ENCODE measurements at regions of chr2 and their contacts with region 1.

Region 1: GRCh38 chr2:197057959-197058358 is 131.5 kb upstream of the PGAP1 start:
- DNase-seq: no peak
- ATAC-seq: no peak
- H3K4me3 Mint-ChIP-seq: no peak overlapping the region
- H3K27ac Mint-ChIP-seq: no peak overlapping the region
- H3K4me1 Mint-ChIP-seq: peaks cover 34% of the 10 kb centered on the region
- H3K27me3 Mint-ChIP-seq: no peaks in the 10 kb centered on the region
- CTCF ChIP-seq: no peak

Region 2: DNA sequence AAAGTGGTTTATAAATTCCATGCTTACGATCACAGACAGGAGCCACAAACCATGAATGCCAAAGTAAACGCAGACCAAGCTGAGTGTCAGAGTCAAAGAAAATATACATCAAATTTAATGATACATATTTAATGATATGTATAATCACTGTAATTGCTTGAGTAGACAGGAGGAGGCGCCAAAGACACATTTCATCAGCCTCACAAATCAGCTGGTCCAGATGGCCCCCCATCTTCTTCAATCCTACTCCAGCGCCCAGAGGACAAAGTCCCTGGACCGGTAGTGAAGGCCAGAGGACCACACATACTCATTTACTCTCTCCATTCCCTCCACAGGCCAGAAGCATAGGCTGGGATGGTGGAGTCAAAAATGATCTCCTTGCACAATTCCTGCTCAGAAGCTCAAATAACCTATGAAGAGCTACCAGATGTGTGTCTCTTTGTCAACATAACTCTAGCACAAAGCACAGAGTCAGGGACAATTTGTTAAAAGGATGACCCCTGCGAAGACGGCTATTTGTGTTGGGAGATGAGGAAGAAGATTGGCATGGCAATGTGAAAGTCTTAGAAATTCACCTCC is 17.9 kb after region 1 on chr2:
- CTCF ChIA-PET with region 1: interaction called, 21 read pairs
- POLR2A ChIA-PET with region 1: no interaction called
- intact Hi-C with region 1: no loop called
- DNase-seq: peak; percentile 20
- ATAC-seq: peak; percentile 35
- H3K4me3 Mint-ChIP-seq: no peak overlapping the region
- H3K27ac Mint-ChIP-seq: no peak overlapping the region
- H3K4me1 Mint-ChIP-seq: peaks cover 45% of the 10 kb centered on the region
- H3K27me3 Mint-ChIP-seq: no peaks in the 10 kb centered on the region
- CTCF ChIP-seq: peak; percentile 62

Region 3: DNA sequence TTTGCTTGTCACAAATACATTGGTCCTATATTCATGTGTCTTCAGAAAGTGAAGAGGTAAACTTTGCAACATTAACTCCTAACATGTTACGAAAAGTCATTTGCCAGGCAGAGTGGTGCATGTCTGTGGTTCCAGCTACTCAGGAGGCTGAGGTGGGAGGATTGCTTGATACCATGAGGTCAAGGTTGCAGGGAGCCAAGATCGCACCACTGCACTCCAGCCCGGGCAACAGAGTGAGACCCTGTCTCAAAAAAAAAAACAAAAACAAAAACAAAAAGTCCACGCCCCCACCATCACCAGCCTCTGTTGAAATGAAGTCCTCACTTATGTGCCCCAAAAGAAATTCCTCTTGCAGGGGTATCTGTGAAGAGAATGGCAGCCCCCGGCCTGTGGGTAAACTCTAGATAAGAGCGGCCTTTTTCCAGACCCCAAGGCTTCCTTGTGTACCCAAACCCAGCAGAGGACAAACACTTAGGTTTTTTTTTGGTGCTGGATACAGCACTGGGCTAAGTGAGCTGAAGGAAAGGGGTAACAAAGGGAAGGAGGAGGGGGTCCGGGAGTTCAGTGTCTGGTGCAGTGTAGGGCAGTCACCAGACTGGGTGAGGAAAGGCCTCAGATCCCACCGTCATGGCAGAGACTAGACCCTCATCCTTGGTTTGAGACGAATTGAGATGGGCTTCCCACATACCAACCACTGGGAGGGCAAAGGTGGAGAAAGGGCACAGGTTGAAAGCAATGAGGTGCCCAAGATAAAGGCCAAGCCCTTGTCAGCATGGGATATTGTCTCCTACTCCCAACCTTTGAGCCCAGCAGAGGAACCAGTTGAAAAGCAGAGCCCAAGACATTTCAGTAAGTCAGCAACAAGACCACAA is 422.4 kb after region 1 on chr2:
- CTCF ChIA-PET with region 1: no interaction called
- POLR2A ChIA-PET with region 1: no interaction called
- intact Hi-C with region 1: no loop called
- DNase-seq: no peak
- ATAC-seq: no peak
- H3K4me3 Mint-ChIP-seq: no peak overlapping the region
- H3K27ac Mint-ChIP-seq: no peak overlapping the region
- H3K4me1 Mint-ChIP-seq: no peaks in the 10 kb centered on the region
- H3K27me3 Mint-ChIP-seq: no peaks in the 10 kb centered on the region
- CTCF ChIP-seq: no peak